AG04449 (cell line): ENCODE measurements at regions of chr11 and their contacts with region 1.

Region 1: GRCh38 chr11:57530596-57531507 is at the start of gene TIMM10:
- DNase-seq: peak; percentile 68
- H3K4me3 ChIP-seq: peak within 1 kb of the TSS; percentile 96
- CTCF ChIP-seq: no peak

Region 2: GRCh38 chr11:57335343-57336110 is 195.3 kb before region 1 on chr11 and contains the start of gene SSRP1:
- CTCF ChIA-PET with region 1: interaction called, 15 read pairs
- POLR2A ChIA-PET with region 1: no interaction called
- DNase-seq: no peak
- H3K4me3 ChIP-seq: peak within 1 kb of the TSS; percentile 78
- CTCF ChIP-seq: no peak

Region 3: DNA sequence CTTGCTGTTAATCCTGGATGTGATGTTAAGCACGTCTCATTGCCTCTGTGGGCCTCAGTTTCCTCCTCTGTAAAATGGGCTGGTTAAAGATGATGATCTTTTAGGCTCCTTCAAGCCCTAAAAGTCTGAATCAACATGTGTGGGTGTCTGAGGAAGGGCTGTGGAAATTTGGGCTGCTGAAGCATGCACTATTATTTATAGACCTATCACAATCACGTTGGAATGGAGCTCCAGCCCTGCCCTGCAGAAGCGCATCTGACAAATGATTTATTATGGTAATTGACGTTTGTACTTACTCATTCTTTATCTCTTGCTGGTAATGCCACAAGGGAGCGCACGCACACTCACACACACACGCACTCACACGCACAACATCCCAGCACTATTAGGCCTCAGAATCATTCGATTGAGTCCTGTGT is 172.3 kb before region 1 on chr11:
- CTCF ChIA-PET with region 1: interaction called, 161 read pairs
- POLR2A ChIA-PET with region 1: no interaction called
- DNase-seq: no peak
- H3K4me3 ChIP-seq: no peak overlapping the region
- CTCF ChIP-seq: no peak

Region 4: GRCh38 chr11:57406337-57406904 is 124.4 kb before region 1 on chr11:
- CTCF ChIA-PET with region 1: no interaction called
- POLR2A ChIA-PET with region 1: no interaction called
- DNase-seq: no peak
- H3K4me3 ChIP-seq: no peak overlapping the region
- CTCF ChIP-seq: no peak

Region 5: DNA sequence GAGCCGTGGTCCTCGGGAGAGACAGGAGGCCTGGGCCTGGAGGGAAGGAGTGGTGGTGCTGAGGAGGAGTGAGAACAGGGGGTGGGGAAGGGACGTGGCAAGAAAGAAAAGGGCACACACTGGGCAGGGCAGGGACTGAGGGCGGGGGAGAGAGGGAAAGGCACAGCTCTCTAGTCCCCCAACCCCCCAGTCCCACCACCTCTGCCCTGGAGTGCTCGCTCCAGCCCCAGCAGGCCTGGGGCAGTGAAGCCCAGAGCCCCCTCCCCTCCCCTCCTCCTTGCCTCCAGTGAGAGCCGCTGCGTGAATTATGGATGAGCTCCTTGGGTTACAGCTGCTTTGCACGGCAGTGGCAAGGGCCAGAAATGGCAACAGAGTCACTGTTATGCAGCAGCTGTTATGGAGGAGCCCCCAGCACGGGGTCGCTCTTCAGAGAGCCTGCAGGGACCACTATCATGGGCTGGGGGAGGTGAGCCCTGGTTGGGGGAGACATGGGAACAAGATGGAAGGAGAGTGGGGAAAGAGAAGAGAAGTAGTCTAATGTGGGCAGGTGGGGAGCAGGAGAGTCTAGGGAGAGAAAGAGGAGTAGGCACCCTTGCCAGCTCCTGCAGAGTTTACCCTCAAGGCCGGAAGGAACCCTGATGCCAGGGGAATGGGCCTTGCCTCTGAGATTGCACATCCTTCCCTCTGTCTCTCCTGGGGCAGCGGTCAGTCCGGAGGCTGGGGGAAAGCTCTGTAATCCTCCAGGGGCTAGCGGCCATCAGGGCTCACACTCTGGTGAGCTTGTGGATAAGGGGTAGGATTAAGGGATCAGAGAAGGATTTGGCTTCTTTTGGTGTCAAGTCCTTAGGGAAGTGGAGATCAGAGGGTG is 66.9 kb before region 1 on chr11:
- CTCF ChIA-PET with region 1: interaction called, 400 read pairs
- POLR2A ChIA-PET with region 1: no interaction called
- DNase-seq: no peak
- H3K4me3 ChIP-seq: no peak overlapping the region
- CTCF ChIP-seq: no peak

Region 6: GRCh38 chr11:57480409-57481137 is 50.3 kb before region 1 on chr11:
- CTCF ChIA-PET with region 1: interaction called, 60 read pairs
- POLR2A ChIA-PET with region 1: no interaction called
- DNase-seq: no peak
- H3K4me3 ChIP-seq: no peak overlapping the region
- CTCF ChIP-seq: peak; percentile 83

Region 7: DNA sequence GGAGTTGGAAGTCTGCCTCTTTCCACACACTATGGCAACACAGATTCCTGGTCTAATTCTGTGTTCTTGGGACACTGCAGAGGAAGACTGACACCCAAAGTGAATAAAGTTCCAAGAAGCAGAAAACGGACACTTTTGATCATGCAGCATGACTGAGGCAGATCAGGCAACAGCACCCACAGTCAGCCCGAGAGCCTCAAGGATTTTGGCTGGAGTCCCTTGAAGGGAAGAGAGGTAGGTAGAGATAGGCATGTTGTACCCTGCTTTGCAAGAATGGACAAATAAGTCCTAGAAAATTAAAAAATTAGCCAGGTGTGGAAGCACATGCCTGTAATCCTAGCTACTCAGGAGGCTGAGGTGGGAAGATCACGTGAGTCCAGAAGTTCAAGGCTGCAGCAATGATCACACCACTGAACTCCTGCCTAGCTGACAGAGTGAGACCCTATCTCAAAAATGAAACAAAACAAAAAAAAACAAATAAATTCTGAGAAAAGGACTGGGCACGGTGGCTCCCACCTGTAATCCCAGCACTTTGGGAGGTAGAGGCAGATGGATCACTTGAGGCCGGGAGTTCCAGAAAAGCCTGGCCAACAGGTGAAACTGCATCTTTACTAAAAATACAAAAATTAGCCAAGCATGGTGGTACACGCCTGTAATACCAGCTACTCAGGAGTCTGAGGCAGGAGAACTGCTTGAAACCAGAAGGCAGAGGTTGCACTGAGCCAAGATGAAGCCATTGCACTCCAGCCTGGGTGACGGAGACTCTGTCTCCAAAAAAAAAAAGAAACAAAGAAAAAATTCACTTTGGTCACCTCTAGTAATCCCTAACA is 22.3 kb before region 1 on chr11:
- CTCF ChIA-PET with region 1: interaction called, 421 read pairs
- POLR2A ChIA-PET with region 1: interaction called, 3 read pairs
- DNase-seq: no peak
- H3K4me3 ChIP-seq: no peak overlapping the region
- CTCF ChIP-seq: no peak

Region 8: DNA sequence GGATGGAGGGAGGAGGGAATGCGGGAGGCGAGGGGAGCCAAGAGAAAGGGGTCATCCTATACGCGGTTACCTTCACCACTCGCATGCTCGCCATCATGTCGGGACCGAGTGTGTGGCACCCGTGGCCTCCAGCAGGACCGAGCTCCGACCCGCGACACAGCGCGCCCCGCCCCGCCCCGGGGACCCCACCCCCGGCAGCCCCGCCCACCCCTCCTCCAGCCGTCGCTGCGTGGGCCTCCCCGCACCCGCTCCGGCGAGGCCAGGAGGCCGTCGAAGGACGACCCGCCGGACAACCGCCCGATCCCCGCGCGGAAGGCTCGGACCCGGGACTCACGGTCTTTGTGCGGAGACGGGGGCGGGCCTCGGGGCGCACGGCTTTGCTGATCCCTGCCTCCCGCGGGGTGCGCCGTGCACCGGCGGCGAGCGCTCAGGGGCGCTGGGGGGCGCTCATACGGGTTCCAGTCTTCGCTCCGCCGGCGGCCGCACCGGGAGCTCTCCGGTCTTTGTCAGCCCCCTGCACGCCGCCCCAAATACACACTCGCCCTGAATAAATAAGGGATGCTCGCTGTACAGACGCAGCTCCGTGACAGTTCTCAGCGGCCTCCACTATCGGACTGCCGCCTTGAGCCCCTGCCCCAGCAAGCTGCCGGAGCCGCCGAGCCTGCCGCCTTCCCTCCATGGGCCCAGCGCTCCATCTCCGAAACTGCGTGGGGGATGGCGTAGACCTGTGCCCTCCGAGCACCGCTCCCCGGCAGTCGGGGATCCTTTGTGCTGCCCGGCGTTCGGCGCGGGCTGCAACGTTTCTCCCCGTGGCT is 36.9 kb after region 1 on chr11 and contains the start of gene UBE2L6:
- CTCF ChIA-PET with region 1: interaction called, 10 read pairs
- POLR2A ChIA-PET with region 1: no interaction called
- DNase-seq: no peak
- H3K4me3 ChIP-seq: peak within 1 kb of the TSS; percentile 89
- CTCF ChIP-seq: peak; percentile 64